ENCODE measurements at regions of chr9 and their contacts with region 1.

Region 1: DNA sequence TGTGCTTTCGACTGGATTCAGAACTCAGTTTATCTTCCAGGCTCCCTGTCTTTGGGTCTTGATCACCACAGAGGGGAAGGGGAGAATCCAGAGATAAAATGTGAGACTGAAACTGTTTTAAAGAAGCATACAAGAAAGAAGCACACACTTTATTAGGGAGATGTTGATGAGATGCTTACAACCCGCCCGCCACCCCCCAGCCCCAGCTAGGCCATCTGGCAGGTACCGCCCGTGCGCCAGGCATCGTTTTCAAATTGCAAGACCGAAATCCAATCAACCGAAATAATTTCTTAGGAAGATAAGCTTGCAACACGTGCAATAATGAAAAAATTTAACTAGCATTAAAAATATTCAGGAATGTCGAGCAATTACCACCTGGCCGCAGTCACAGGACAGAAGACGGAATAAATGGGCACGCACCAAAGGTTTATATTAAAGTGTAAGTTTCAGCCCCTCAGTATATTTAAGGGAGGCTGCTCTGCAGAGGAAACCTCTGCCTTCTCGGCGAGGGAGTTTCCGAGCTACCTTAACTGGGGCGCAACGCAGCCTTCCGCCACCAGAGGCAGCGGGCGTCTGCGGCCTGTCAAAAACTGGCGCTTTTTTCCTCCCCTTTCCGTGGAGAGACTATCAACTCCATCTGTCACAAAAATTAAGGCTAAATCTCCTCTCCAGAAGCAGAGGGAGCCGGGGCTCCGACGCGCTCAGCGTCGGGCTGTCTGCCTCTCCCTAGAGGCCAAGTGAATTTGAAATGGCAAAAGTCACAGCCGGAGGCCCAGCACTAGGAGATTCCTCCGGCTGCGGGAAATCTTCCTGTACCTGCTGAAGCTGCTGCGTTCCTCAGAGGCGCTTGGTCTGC is 996 bp upstream of the GAS1 start:
- DNase-seq: peak; percentile 73 to 89 (median 84)
- H3K4me3 ChIP-seq: peak overlapping the region; percentile 65 to 92 (median 79)
- H3K27ac ChIP-seq: peak overlapping the region; percentile 77 to 99 (median 97)
- H3K27me3 ChIP-seq: no peaks in the 10 kb centered on the region
- CTCF ChIP-seq: peak; percentile 49 to 92 (median 78)

Region 2: DNA sequence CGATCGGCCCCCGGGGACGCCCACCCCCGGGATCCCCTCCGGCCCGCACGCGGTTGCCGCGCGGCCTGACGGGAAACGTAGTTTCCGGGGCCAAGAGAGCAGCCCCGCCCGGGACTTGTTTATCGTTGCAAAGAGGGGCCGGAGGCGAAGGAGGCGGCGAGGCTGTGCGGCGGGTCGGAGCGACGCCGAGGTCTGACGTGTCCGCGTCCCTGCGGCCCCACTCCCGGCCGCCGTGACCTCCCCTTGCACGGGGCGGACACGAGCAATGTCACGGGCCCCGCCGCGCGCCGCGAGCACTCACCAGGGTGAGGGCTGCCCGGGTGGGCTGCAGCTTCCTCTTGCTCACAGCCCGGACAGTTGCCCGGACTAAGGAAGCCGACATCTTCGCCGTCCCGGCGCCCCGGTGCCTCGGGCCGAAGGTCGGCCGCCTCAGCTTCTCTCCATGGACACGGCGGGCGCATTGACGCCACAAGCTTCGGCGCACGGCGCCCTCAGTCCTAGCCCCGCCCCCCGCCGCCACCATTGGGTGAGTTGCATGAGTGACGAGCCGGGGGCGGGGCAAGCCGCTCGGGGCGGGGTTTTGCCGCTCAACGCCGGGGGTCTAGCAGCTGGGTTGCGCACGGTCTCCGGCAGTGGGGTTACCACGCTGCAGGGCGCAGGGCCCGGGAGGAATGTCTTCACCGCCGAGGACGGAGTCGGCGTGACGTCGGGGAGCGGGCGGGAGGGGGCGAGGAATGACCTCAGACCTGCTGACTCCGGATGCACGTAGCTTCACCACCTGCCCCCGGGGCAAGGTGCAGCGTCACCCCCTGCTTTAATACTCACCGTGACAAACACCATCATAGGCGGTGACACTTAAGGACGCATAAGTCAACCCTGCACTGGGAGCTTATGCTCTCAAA is 666.0 kb before region 1 on chr9 and contains the start of gene ISCA1:
- intact Hi-C with region 1: loop called in 1 of 2 experiments (anchors 5 kb)
- DNase-seq: peak; percentile 94 to 99 (median 97)
- H3K4me3 ChIP-seq: peak within 1 kb of the TSS; percentile 63 to 100 (median 95)
- H3K27ac ChIP-seq: peak within 1 kb of the TSS; percentile 86 to 100 (median 98)
- H3K27me3 ChIP-seq: no peaks in the 10 kb centered on the region
- CTCF ChIP-seq: peak in 8 of 56 donors; percentile 2 to 34 (median 10)
- total RNA-seq, gene ISCA1: 41.6 to 97.5 (median 70.2) TPM

Region 3: GRCh38 chr9:86434039-86434726 is 514.1 kb before region 1 on chr9:
- intact Hi-C with region 1: loop called in 1 of 2 experiments (anchors 10 kb)
- DNase-seq: peak in 1 of 10 donors; percentile 3
- H3K4me3 ChIP-seq: peak overlapping the region in 1 of 59 donors; percentile 26
- H3K27ac ChIP-seq: no peak overlapping the region
- H3K27me3 ChIP-seq: peaks cover 0 to 4% (median 0%) of the 10 kb centered on the region in 45 donors
- CTCF ChIP-seq: peak; percentile 56 to 87 (median 68)

Region 4: DNA sequence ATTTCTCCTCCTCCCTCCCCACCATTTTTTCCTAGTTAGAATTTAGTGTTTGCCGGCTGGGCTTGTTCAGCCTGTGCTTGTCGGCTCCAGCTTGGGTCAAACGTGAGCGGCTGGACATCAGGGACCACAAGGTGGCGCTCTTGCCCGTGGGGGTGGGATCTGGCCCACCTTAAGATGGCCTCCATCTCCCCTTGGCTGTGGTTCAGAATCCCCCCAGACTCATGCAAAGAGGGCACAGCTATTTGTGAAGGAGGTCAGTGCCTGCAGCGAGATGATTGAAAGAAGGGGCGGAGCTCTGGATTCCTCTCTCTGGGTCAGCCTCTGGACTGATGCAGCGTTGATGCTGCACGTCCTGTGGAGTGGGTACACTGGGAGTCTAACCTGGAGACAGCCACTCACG is 310.8 kb before region 1 on chr9:
- intact Hi-C with region 1: loop called in 1 of 2 experiments (anchors 5 kb)
- DNase-seq: no peak
- H3K4me3 ChIP-seq: no peak overlapping the region
- H3K27ac ChIP-seq: no peak overlapping the region
- H3K27me3 ChIP-seq: peaks cover 0 to 8% (median 0%) of the 10 kb centered on the region in 45 donors
- CTCF ChIP-seq: peak in 51 of 56 donors; percentile 18 to 68 (median 47)

Region 5: DNA sequence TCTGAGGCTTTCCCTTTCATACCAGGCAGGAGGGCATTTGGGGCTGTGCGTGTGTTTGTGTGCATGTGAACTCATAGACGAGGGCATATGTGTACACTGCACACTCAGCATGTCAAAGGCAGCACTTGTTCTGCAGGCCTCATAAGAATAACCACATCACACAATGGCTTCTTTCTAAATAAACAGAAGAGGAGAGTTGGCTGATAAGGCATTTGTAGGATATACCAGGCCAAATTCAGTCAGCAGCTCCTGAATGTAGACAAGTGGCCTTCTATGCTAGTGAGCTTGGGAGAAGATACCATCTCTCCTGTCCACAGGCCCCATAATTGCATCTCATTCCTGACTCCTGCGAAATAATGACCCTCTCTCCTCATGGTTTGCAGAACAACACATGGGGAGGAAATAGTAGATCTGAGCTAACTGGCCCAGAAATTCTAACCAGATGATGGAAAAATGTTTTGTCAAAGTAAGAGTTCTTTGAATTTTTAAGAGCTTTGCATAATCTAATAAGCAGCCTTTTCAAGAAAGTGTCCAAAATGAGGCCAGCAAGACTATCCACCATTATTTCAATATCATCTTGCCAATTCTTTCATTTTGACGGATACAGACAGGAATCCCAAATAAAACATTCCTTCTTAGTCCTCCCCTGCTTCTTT is 59.5 kb after region 1 on chr9:
- intact Hi-C with region 1: loop called (anchors 5 kb)
- DNase-seq: peak in 5 of 10 donors; percentile 19 to 65 (median 47)
- H3K4me3 ChIP-seq: peak overlapping the region in 1 of 59 donors; percentile 18
- H3K27ac ChIP-seq: peak overlapping the region in 57 of 59 donors; percentile 7 to 91 (median 72)
- H3K27me3 ChIP-seq: no peaks in the 10 kb centered on the region
- CTCF ChIP-seq: peak in 1 of 56 donors; percentile 13

Region 6: GRCh38 chr9:87148331-87149104 is 200.2 kb after region 1 on chr9:
- intact Hi-C with region 1: loop called (anchors 1 to 2 kb)
- DNase-seq: peak; percentile 72 to 90 (median 85)
- H3K4me3 ChIP-seq: peak overlapping the region; percentile 8 to 73 (median 57)
- H3K27ac ChIP-seq: peak overlapping the region; percentile 54 to 99 (median 94)
- H3K27me3 ChIP-seq: no peaks in the 10 kb centered on the region
- CTCF ChIP-seq: peak in 49 of 56 donors; percentile 12 to 71 (median 38)

Measured in dorsolateral prefrontal cortex (tissue), 120 donors.